Motor neuron (in vitro differentiated cells): ENCODE measurements at regions of chr14 and their contacts with region 1.

Region 1: DNA sequence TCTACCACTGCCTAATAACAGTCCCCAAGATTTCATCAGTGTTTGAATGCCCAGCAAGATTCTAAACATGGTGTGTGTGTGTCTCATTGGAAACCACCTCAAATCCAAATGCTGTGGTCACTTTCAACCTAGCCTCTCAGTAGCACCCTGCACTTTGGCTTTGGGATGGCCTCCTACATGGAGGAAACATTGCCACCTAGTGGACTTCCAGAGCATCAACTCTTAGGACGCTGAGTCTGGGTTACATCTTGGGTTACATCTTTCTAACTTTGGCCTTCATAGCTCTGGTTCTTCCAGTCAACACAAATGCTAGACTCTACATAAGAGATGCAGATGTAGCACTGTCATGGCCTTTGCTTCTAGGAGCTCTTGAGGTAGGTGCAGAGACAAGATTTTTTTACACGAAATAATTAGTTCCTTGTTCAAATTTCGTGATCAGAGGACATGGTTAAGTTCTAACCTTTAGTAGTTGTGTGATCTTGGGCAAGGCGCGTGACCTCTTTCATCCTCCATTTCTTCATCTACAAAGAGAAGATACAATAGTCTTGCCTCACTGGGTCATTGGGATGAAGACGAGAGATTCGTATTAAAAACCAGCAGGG is 113.5 kb upstream of the VASH1 start:
- ATAC-seq: peak in 7 of 8 experiments; percentile 10 to 94 (median 33)
- H3K4me3 ChIP-seq: no peak overlapping the region
- H3K27ac ChIP-seq: no peak overlapping the region
- H3K4me1 ChIP-seq: peaks cover 18 to 19% of the 10 kb centered on the region in 2 donors

Region 2: DNA sequence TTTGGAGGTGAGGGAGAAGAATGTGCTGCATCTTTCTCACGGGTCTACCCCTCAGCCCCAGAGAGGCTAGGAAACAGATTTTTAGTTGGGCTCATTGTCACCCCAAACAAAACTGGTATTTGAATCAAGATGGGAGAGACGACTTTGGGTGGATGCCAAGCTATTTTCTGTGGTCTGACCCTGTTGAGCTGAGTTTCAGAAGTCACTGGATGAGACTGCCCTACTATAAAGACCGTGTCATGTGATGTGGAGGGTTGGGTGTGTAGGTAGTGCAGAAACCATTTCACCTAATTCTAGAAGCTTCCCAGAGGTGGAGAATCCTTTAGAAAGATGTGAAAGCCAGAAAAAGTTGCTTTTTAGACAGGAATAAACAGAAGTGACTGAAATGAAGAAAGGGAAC is 602.0 kb before region 1 on chr14:
- in situ Hi-C with region 1: loop called in 6 of 9 experiments (anchors 10 to 25 kb)
- ATAC-seq: no peak
- H3K4me3 ChIP-seq: no peak overlapping the region
- H3K27ac ChIP-seq: no peak overlapping the region
- H3K4me1 ChIP-seq: peaks cover 0 to 5% of the 10 kb centered on the region in 2 donors

Region 3: DNA sequence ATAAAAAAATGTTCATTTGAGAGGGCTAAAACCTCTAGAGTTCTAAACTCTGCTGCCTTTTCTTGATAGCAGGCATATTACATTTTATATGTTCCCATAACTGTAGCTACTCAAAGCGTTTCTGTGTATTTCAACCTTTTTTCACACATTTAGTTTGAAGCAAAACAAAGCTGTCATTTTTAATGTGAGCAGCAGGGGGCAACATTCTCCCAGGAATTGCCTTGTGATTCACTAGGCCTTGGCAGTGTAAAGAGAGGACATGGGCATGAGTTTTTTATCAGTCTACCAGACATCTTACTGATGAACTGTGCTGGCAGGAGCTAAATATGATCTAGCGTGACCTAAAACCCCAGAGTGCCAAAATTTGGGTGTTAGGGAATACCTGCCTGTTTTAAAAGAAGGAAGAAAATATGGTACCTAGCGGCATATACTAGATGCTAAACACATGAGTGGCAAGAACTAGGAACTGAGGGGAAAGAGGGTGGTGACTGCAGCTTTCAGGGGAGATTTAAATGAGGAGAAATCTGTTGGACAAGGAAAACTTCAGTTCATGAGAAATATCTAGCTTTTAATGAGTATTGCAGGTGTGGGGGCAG is 596.9 kb before region 1 on chr14:
- in situ Hi-C with region 1: loop called in 6 of 9 experiments (anchors 10 to 25 kb)
- ATAC-seq: peak; percentile 42 to 86 (median 68)
- H3K4me3 ChIP-seq: no peak overlapping the region
- H3K27ac ChIP-seq: no peak overlapping the region
- H3K4me1 ChIP-seq: peaks cover 0 to 5% of the 10 kb centered on the region in 2 donors

Region 4: DNA sequence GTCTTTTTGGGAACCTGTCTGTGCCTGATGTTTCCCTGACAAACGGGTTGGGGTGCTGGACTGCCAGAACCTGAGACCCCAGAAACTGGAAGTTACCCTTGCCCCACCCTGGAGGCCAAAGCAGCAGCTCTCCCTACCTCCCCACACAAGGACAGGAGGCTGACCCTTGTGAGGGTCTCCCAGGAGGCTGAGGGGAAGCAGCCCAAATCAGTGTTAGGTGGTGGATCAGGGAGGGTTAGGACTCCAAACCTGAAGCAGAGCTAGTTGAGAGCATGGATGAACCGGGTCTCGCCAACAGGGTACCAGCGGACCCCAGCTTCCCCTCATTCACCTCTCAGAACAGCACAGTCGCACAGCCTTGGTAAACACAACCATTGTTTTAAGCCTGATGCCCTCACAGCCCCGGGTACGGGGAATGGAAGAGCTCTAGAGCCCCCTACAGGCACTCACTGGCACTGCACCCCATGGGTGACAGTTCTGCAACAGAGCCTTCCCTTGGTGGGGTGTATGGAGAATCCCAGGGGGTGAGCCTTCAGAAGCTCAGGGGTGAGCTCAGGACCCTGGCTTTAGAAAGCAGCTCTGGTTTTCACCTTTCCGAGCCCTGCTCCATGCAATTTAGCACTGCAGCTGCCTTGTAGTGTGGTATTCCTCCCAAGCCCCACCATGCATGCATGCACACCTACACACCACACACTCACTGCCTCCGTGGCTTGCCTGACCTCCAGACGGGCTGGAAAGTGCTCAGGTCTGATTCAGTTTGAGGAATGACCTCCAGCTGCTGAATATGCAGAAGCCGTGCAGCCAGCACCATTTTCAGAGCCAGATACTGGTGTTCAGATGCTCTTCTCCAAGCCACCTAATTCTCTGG is 260.6 kb before region 1 on chr14:
- in situ Hi-C with region 1: loop called in 1 of 9 experiments (anchors 25 kb)
- ATAC-seq: peak; percentile 91 to 99 (median 97)
- H3K4me3 ChIP-seq: no peak overlapping the region
- H3K27ac ChIP-seq: no peak overlapping the region
- H3K4me1 ChIP-seq: peaks cover 3 to 8% of the 10 kb centered on the region in 2 donors

Region 5: DNA sequence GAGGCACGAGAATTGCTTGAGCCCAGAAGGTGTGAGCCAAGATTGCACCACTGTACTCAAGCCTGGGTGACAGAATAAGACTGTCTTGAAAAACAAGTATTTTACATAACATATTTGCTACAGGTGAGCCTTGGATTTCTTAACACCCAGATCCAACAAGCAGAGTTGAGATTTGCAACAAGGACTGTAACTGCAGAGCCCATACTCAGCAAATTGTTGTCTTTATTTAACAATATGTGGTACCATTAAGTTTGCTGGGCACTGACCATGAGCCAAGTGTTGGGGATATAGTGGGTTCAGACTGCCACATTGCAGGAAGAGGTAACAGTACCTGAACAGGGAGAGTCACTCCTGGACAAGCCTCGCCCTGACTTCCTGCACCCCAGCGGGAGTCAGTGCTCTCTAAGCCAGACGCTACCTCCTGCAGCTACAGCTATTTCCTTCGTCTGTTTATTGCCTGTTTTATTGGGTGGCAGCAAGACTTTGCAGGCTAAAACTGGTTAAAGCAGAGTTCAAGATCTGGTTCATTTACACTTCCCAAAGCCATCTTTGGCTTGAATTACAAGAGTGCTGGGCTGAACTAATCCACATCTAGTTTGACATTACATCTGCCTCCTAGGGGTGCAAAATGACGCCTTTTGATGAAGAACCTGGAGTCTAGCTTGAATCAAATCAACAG is 822.5 kb after region 1 on chr14:
- in situ Hi-C with region 1: no loop called
- ATAC-seq: no peak
- H3K4me3 ChIP-seq: no peak overlapping the region
- H3K27ac ChIP-seq: no peak overlapping the region
- H3K4me1 ChIP-seq: peaks cover 0 to 5% of the 10 kb centered on the region in 2 donors